ENCODE measurements at regions of chr2 and their contacts with region 1.

Region 1: GRCh38 chr2:152025678-152026287 is 73.1 kb downstream of the CACNB4 start:
- DNase-seq: peak; percentile 83
- H3K4me3 Mint-ChIP-seq: peak overlapping the region; percentile 70
- H3K27ac Mint-ChIP-seq: no peak overlapping the region
- H3K4me1 Mint-ChIP-seq: peaks cover 3% of the 10 kb centered on the region
- H3K27me3 Mint-ChIP-seq: peaks cover 23% of the 10 kb centered on the region

Region 2: DNA sequence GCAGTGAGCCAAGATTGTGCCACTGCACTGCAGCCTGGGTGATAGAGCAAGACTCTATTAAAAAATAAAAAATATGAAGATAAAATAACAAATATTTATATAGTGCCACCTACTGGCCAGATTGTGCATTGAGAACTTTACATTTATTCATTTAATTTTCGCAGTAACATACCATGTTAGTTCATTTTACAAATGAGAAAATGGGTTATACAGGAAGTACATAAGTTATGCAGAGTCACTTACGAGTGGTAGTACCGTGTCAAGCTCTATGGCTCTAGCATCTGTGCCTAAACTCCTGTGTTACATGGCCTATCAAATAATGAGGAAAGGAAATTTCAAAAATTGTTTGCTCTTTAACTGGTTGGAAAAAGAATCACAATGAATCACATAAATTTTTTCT is 588.2 kb before region 1 on chr2:
- CTCF ChIA-PET with region 1: interaction called, 11 read pairs
- POLR2A ChIA-PET with region 1: no interaction called
- DNase-seq: no peak
- H3K4me3 Mint-ChIP-seq: no peak overlapping the region
- H3K27ac Mint-ChIP-seq: peak overlapping the region; percentile 40
- H3K4me1 Mint-ChIP-seq: peaks cover 7% of the 10 kb centered on the region
- H3K27me3 Mint-ChIP-seq: no peaks in the 10 kb centered on the region

Region 3: DNA sequence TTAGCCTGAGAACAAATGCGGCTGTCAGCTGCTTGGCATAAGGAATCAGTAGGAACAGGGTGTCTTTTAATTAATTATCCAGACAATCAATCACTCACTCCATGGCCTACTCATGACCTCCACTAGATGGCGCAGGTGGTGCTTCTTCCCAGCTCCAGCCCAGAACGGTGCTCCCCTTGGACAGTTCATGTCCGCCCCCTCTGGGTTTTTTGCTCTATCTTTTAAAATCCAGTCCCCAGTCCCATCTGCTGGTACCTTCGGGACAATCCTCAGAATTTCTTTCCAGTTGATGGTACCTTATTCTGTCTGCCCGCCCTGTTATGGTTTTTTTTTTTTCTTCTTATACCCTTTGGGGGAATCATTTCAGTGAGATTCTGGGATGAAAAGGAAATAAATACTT is 26.7 kb before region 1 on chr2:
- CTCF ChIA-PET with region 1: interaction called, 19 read pairs
- POLR2A ChIA-PET with region 1: no interaction called
- DNase-seq: peak; percentile 46
- H3K4me3 Mint-ChIP-seq: no peak overlapping the region
- H3K27ac Mint-ChIP-seq: no peak overlapping the region
- H3K4me1 Mint-ChIP-seq: peaks cover under 1% of the 10 kb centered on the region
- H3K27me3 Mint-ChIP-seq: no peaks in the 10 kb centered on the region

Region 4: GRCh38 chr2:152012697-152013096 is 13.1 kb before region 1 on chr2:
- CTCF ChIA-PET with region 1: interaction called, 23 read pairs
- POLR2A ChIA-PET with region 1: no interaction called
- DNase-seq: no peak
- H3K4me3 Mint-ChIP-seq: no peak overlapping the region
- H3K27ac Mint-ChIP-seq: no peak overlapping the region
- H3K4me1 Mint-ChIP-seq: no peaks in the 10 kb centered on the region
- H3K27me3 Mint-ChIP-seq: peaks cover 10% of the 10 kb centered on the region

Region 5: GRCh38 chr2:152036611-152037469 is 11.1 kb after region 1 on chr2:
- CTCF ChIA-PET with region 1: interaction called, 22 read pairs
- POLR2A ChIA-PET with region 1: no interaction called
- DNase-seq: peak; percentile 61
- H3K4me3 Mint-ChIP-seq: no peak overlapping the region
- H3K27ac Mint-ChIP-seq: no peak overlapping the region
- H3K4me1 Mint-ChIP-seq: no peaks in the 10 kb centered on the region
- H3K27me3 Mint-ChIP-seq: peaks cover under 1% of the 10 kb centered on the region

Region 6: GRCh38 chr2:152309352-152310214 is 283.8 kb after region 1 on chr2:
- CTCF ChIA-PET with region 1: no interaction called
- POLR2A ChIA-PET with region 1: no interaction called
- DNase-seq: no peak
- H3K4me3 Mint-ChIP-seq: no peak overlapping the region
- H3K27ac Mint-ChIP-seq: no peak overlapping the region
- H3K4me1 Mint-ChIP-seq: no peaks in the 10 kb centered on the region
- H3K27me3 Mint-ChIP-seq: no peaks in the 10 kb centered on the region

Measured in activated CD4-positive, alpha-beta memory T cell treated with anti-CD3 and anti-CD28 coated beads, Interleukin-2, amount 10 ng/mL, durations not matched to agents 7 days and 5 days (primary cell).